Left colon (tissue), 2 donors: ENCODE measurements at regions of chr16 and their contacts with region 1.

Region 1: DNA sequence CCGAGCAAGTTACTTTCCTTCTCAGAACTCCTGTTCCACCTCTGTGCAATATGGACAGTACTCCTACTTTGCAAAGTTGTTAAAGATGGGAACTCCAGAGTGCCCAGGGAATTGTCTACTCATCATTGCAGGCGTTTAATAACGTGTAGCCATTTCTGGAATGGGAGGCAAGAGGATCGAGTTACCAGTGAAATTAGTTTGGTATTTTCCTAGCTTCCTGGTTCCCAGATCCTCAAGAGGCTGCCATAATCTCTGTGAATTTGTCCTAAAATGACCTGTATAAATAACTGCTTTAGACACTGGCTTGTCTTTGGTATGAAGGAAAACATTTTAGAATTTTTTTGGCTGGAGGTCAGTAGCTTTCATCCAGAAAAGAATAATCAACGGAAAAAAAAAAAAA is 27.7 kb downstream of the WWOX start:
- DNase-seq: no peak
- ATAC-seq: no peak

Region 2: GRCh38 chr16:78230832-78231231 is 103.7 kb after region 1 on chr16:
- intact Hi-C with region 1: loop called in 1 of 2 experiments (anchors 5 kb)
- DNase-seq: no peak
- ATAC-seq: peak; percentile 87

Region 3: DNA sequence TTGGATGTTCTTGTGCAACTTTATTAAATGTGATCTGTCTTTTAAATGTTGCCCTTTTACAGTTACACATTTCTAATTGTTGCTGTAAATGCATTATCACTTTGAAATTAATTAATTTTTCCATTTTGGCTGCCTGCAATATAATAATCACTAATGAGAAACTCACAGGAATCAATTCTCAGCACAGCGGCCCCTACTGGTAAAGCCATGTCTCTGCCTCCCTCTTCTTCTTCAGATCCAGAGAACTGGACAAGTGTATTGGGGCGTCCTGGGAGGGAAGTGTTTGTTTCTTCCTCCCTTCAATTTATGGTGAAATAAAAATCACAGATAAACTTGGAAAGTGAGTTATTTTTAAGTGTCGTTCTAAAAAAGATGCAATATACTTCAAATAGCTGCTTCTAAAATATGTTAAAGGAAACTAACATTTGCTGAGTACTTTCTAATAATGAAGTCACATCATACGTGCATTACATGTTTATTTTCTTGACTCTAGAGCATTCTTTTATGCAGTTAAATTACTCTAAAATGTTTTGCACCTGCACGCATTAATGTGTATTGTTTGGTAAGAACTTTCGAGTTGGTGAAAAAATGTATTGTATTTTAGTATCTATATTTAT is 310.3 kb after region 1 on chr16:
- intact Hi-C with region 1: no loop called
- DNase-seq: no peak
- ATAC-seq: no peak